H1 (cell line): ENCODE measurements at regions of chr1 and their contacts with region 1.

Region 1: DNA sequence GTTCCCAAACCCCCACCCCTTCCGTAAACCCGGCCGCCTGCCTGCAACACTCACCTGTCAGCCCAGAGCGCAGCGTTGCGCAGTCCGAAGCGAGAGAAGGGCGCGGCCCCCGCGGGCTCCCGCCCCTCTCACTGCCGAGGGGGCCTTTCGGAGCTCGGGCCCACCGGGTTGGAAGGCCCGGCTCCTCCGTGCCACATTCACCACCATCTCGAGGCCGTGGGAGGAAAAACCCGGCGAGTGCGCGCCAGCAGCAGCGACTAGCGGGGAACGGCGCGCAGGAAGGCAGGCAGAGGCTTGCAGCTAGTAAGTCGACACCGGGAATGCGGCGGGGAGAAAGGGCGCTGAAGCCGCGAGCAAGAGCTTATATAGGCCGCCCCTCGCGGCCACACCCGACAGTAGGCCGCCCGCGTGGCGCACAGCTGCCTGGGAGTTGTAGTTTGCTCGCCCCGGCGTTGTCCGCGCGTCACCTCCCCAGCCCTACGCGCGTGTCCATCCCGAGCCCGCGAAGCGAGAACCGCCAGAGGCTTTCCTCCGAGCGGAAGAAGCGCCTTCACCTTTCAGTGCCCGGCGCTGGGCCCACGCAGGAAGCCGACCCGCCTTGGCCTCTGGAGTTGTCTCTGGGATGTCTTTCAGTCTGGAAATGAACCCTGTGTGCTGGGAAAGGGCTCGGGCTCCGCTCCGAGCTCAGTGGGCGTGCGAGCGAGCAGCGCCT is 10.4 kb upstream of the RAB42 start:
- DNase-seq: peak; percentile 79 to 99
- H3K4me3 ChIP-seq: peak overlapping the region; percentile 86 to 97 (median 92)
- H3K27ac ChIP-seq: peak overlapping the region; percentile 30; the same call in 1 of the 2 replicates
- H3K4me1 ChIP-seq: peaks cover 0 to 11% (median 6%) of the 10 kb centered on the region in 4 experiments; a peak in 4 of 7 replicates
- H3K27me3 ChIP-seq: peaks cover 0 to 4% (median 2%) of the 10 kb centered on the region in 4 experiments; a peak in 2 of 7 replicates
- CTCF ChIP-seq: no peak
- EP300 ChIP-seq: no peak
- POLR2A ChIP-seq: peak; percentile 100
- RAD21 ChIP-seq: peak in 1 of 2 experiments; percentile 3; a peak in 1 of 4 replicates

Region 2: GRCh38 chr1:28259307-28260167 is 322.2 kb before region 1 on chr1 and contains the start of gene SESN2:
- CTCF ChIA-PET with region 1: no interaction called
- POLR2A ChIA-PET with region 1: interaction called, 18 read pairs
- DNase-seq: peak; percentile 94 to 99
- H3K4me3 ChIP-seq: peak within 1 kb of the TSS; percentile 73 to 97 (median 88)
- H3K27ac ChIP-seq: peak within 1 kb of the TSS; percentile 67; the same call in 1 of the 2 replicates
- H3K4me1 ChIP-seq: peaks cover 3 to 17% (median 11%) of the 10 kb centered on the region in 4 experiments; a peak in 5 of 7 replicates
- H3K27me3 ChIP-seq: no peaks in the 10 kb centered on the region
- CTCF ChIP-seq: no peak
- EP300 ChIP-seq: no peak
- POLR2A ChIP-seq: peak; percentile 79 to 95
- RAD21 ChIP-seq: no peak
- total RNA-seq, gene SESN2: 22.6 and 25.1 TPM in 2 replicates

Region 3: GRCh38 chr1:28540651-28541050 is 41.0 kb before region 1 on chr1:
- CTCF ChIA-PET with region 1: no interaction called
- POLR2A ChIA-PET with region 1: interaction called, 118 read pairs
- DNase-seq: no peak
- H3K4me3 ChIP-seq: no peak overlapping the region
- H3K27ac ChIP-seq: no peak overlapping the region
- H3K4me1 ChIP-seq: no peaks in the 10 kb centered on the region
- H3K27me3 ChIP-seq: no peaks in the 10 kb centered on the region; a peak in 1 of 7 replicates
- CTCF ChIP-seq: peak; percentile 20 to 36 (median 30); a peak in 3 of 4 replicates
- EP300 ChIP-seq: no peak
- POLR2A ChIP-seq: no peak
- RAD21 ChIP-seq: peak in 1 of 2 experiments; percentile 23; a peak in 1 of 4 replicates

Region 4: DNA sequence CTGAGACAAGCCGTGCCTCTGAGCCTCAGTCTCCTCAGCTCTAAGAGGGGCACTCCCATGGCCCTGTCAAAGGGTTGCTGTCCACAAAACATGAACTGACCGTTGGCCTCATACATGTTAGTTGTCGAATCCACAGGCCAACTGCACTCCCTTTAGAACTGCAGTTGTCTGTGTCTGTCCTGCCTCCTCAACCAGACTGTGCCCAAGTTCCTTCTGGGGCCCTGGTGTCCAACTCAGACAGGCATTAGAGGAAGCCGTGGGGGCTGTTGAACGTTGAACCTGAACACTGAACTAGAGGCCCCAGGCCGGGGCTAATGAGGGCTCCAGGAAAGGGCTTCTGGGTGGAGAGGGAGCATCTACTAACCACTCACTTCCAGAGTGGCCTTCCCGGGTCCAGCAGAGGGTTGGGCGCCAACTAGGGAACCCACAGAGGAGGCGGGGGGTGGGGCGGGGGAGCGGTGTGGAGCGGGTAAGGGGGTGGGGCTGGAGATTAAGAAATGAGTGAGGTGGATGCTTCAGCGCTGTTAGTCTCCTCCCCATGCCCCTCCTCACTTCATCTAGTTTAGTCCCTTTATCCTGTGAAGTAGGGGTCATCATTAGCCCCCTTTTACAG is 10.1 kb after region 1 on chr1 and contains the start of gene RAB42:
- CTCF ChIA-PET with region 1: interaction called, 16 read pairs
- POLR2A ChIA-PET with region 1: interaction called, 473 read pairs
- DNase-seq: peak in 1 of 2 experiments; percentile 76
- H3K4me3 ChIP-seq: peak within 1 kb of the TSS; percentile 40 to 66 (median 56)
- H3K27ac ChIP-seq: no peak within 1 kb of the TSS
- H3K4me1 ChIP-seq: peaks cover 9 to 18% (median 16%) of the 10 kb centered on the region in 4 experiments
- H3K27me3 ChIP-seq: peaks cover 0 to 7% (median 2%) of the 10 kb centered on the region in 4 experiments; a peak in 3 of 7 replicates
- CTCF ChIP-seq: no peak
- EP300 ChIP-seq: no peak
- POLR2A ChIP-seq: no peak
- RAD21 ChIP-seq: no peak
- total RNA-seq, gene RAB42: 12.5 and 13.6 TPM in 2 replicates

Region 5: GRCh38 chr1:28642847-28643635 is 61.3 kb after region 1 on chr1 and contains the start of gene TAF12:
- CTCF ChIA-PET with region 1: interaction called, 5 read pairs
- POLR2A ChIA-PET with region 1: interaction called, 63 read pairs
- DNase-seq: peak; percentile 87 to 92
- H3K4me3 ChIP-seq: peak within 1 kb of the TSS; percentile 73 to 95 (median 86)
- H3K27ac ChIP-seq: peak within 1 kb of the TSS; percentile 84
- H3K4me1 ChIP-seq: peaks cover 0 to 5% (median 4%) of the 10 kb centered on the region in 4 experiments; a peak in 3 of 7 replicates
- H3K27me3 ChIP-seq: no peaks in the 10 kb centered on the region
- CTCF ChIP-seq: peak; percentile 52 to 59 (median 59)
- EP300 ChIP-seq: no peak
- POLR2A ChIP-seq: peak; percentile 92 to 94
- RAD21 ChIP-seq: peak; percentile 58 to 64
- total RNA-seq, gene TAF12: 23.7 and 27.2 TPM in 2 replicates

Region 6: DNA sequence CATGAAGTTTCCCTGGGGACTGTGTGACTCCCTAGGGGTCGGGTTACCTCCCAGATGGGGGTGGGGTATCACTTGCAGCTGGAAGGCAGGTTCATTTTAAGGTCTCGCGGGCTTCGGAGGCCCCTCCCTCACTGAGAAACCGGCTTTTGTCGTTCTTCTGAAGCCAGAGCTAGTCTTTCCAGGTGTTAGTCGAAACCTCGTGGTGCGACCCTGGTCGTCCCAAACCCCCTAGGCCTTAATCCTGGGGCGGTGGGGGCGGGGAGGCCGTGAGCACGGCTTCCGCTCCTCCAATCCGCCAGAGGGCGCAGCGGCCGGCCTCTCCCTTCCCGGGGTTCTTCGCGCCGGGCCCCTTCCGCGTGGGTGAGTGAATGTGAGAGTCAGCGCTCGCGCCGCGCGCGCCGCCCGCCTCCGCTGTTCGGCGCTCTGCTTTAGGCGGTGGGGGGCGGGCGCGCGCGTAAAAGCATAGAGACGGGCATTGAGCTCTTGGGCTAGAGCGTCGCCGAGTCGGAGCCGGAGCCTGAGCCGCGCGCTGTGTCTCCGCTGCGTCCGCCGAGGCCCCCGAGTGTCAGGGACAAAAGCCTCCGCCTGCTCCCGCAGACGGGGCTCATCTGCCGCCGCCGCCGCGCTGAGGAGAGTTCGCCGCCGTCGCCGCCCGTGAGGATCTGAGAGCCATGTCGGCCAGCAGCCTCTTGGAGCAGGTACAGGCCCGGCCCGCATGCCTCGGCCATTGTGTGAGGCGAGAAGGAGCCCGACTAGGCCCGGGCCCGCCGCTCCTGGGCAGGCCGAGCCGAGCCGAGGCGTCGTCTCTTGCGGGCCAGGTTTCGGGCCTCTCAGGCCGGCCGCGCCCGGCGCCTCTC is 155.0 kb after region 1 on chr1 and contains the start of gene YTHDF2:
- CTCF ChIA-PET with region 1: no interaction called
- POLR2A ChIA-PET with region 1: interaction called, 10 read pairs
- DNase-seq: peak; percentile 94 to 97
- H3K4me3 ChIP-seq: peak within 1 kb of the TSS; percentile 88 to 97 (median 94)
- H3K27ac ChIP-seq: peak within 1 kb of the TSS; percentile 98
- H3K4me1 ChIP-seq: peaks cover 0 to 11% (median 3%) of the 10 kb centered on the region in 4 experiments; a peak in 6 of 7 replicates
- H3K27me3 ChIP-seq: no peaks in the 10 kb centered on the region
- CTCF ChIP-seq: peak; percentile 73 to 84 (median 83)
- EP300 ChIP-seq: peak in 1 of 2 experiments; percentile 76; a peak in 1 of 3 replicates
- POLR2A ChIP-seq: peak; percentile 27 to 91
- RAD21 ChIP-seq: peak; percentile 29 to 34
- total RNA-seq, gene YTHDF2: 159 and 164 TPM in 2 replicates

Region 7: DNA sequence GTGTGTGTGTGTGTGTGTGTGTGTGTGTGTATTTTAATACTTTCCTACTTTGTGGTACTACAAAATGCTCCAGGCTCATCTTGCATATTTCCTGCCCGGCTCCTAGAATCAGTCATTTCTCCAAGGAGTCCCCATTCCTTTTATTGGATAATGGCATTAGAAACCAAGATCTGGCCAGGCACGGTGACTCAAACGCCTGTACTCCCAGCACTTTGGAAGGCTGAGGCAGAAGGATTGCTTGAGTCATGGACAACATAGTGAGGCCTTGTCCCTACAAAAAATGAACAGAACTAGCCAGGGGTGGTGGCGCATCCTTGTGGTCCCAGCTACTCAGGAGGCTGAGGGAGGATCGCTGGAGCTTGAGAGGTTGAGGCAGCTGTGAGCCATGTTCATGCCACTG is 353.0 kb after region 1 on chr1:
- CTCF ChIA-PET with region 1: no interaction called
- POLR2A ChIA-PET with region 1: no interaction called
- DNase-seq: no peak
- H3K4me3 ChIP-seq: no peak overlapping the region
- H3K27ac ChIP-seq: no peak overlapping the region
- H3K4me1 ChIP-seq: no peaks in the 10 kb centered on the region
- H3K27me3 ChIP-seq: no peaks in the 10 kb centered on the region
- CTCF ChIP-seq: no peak
- EP300 ChIP-seq: no peak
- POLR2A ChIP-seq: no peak
- RAD21 ChIP-seq: no peak